ENCODE measurements at regions of chr14 and their contacts with region 1.

Region 1: DNA sequence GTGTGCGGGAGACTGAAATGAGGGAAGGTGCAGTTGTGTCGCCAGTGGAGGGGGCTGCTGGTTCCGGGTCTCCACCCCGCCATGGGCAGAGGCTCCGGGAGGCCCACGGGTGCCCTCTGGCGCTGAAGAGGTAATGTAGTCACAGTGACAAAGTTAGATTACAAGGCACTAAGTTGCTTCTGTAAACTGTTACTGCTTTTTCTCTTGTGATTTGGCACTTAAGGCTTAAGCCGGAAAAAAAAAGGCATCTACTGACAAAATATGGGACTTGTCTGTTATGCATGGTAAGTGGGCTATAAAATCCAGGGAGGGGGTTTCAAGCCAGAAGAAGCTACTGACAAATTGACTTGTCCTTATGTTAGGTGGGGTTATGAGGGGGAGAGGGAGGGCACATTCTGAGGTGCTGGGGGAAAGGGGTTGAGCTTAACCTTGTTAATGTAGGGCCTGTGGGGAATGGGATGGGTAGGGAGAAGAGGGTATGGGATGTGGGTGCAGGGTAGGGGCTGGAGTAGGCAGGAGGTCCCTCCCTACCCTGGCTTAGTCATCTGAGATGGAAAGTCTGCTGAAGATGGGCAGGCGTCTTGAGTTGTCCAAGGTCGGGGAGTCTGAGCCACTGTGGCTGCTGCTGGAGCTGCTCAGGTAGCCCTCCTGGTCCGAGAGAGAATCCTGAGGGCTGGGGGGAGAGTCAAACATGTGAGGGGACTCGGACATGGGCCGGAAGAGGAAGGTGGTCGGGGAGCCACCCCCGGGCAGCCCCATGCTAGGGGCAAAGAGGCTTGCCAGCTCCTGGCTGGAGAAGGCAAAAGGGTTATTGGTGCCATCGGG is 3.7 kb downstream of the ZFP36L1 start:
- DNase-seq: peak; percentile 70 to 91 (median 88)
- ATAC-seq: peak; percentile 64
- H3K4me3 ChIP-seq: peak overlapping the region; percentile 91
- H3K4me3 Mint-ChIP-seq: peak overlapping the region; percentile 92 to 99 (median 95)
- H3K27ac ChIP-seq: peak overlapping the region; percentile 100
- H3K27ac Mint-ChIP-seq: peak overlapping the region; percentile 91 to 100 (median 99)
- H3K4me1 ChIP-seq: peaks cover 37 to 43% of the 10 kb centered on the region in 2 donors
- H3K4me1 Mint-ChIP-seq: peaks cover 43 to 61% (median 50%) of the 10 kb centered on the region in 7 donors
- H3K27me3 ChIP-seq: no peaks in the 10 kb centered on the region
- H3K27me3 Mint-ChIP-seq: peaks cover 0 to 2% (median 0%) of the 10 kb centered on the region in 5 donors

Region 2: GRCh38 chr14:67943947-67944346 is 845.3 kb before region 1 on chr14:
- CTCF ChIA-PET with region 1: interaction called, 3 read pairs
- POLR2A ChIA-PET with region 1: interaction called, 3 read pairs
- intact Hi-C with region 1: loop called in 1 of 2 experiments (anchors 1 kb)
- DNase-seq: peak in 7 of 9 donors; percentile 22 to 57 (median 49)
- ATAC-seq: peak; percentile 80
- H3K4me3 ChIP-seq: no peak overlapping the region
- H3K4me3 Mint-ChIP-seq: no peak overlapping the region
- H3K27ac ChIP-seq: no peak overlapping the region
- H3K27ac Mint-ChIP-seq: no peak overlapping the region
- H3K4me1 ChIP-seq: no peaks in the 10 kb centered on the region
- H3K4me1 Mint-ChIP-seq: peaks cover 0 to 2% (median 0%) of the 10 kb centered on the region in 7 donors
- H3K27me3 ChIP-seq: no peaks in the 10 kb centered on the region
- H3K27me3 Mint-ChIP-seq: no peaks in the 10 kb centered on the region

Region 3: DNA sequence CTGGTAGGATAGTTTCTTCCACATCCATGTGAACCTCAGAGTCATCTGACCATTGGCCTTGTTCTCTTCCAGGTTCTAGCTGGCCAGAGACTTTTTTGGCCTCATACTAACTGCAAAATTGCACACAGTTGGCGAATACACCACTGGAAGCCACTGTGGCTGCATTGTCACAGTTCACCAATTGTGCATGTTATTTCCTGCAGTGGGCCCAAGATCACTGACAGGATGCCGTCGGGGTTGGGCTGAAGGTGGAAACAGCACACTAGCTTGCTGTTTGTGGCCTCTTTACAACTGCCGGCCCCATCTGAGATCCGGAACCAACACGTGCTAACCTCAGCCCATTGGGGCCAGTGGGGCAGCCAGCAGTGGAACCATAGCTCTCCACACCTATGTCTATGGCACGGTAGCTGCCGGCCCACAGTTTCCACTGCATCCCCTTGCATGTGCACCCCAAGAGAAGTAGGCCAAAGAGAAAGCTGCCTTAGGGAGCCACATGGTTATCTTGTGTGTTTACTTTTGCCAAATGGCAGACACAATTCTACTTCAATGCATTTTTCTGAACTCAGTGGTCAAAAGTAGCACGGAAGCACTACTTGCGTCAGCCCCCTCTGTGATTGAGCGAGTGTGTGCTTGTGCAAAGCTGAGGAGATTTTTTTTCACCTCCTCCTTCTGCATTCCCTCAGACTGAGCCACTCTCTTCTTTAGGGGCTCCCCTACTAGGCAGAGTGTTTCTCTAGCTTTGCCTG is 505.7 kb before region 1 on chr14:
- CTCF ChIA-PET with region 1: interaction called, 26 read pairs
- POLR2A ChIA-PET with region 1: interaction called, 180 read pairs
- intact Hi-C with region 1: loop called (anchors 1 to 10 kb)
- DNase-seq: peak; percentile 20 to 70 (median 62)
- ATAC-seq: peak; percentile 78
- H3K4me3 ChIP-seq: peak overlapping the region; percentile 14
- H3K4me3 Mint-ChIP-seq: peak overlapping the region; percentile 44 to 86 (median 72)
- H3K27ac ChIP-seq: peak overlapping the region; percentile 74
- H3K27ac Mint-ChIP-seq: peak overlapping the region; percentile 93 to 99 (median 97)
- H3K4me1 ChIP-seq: peaks cover 36 to 70% of the 10 kb centered on the region in 2 donors
- H3K4me1 Mint-ChIP-seq: peaks cover 44 to 96% (median 86%) of the 10 kb centered on the region in 7 donors
- H3K27me3 ChIP-seq: no peaks in the 10 kb centered on the region
- H3K27me3 Mint-ChIP-seq: no peaks in the 10 kb centered on the region

Region 4: GRCh38 chr14:68482772-68483395 is 306.3 kb before region 1 on chr14:
- CTCF ChIA-PET with region 1: interaction called, 3 read pairs
- POLR2A ChIA-PET with region 1: interaction called, 19 read pairs
- intact Hi-C with region 1: loop called (anchors 5 kb)
- DNase-seq: no peak
- ATAC-seq: no peak
- H3K4me3 ChIP-seq: no peak overlapping the region
- H3K4me3 Mint-ChIP-seq: peak overlapping the region in 9 of 10 donors; percentile 28 to 85 (median 39)
- H3K27ac ChIP-seq: no peak overlapping the region
- H3K27ac Mint-ChIP-seq: peak overlapping the region in 8 of 9 donors; percentile 71 to 96 (median 92)
- H3K4me1 ChIP-seq: peaks cover 22 to 48% of the 10 kb centered on the region in 2 donors
- H3K4me1 Mint-ChIP-seq: peaks cover 37 to 84% (median 79%) of the 10 kb centered on the region in 7 donors
- H3K27me3 ChIP-seq: no peaks in the 10 kb centered on the region
- H3K27me3 Mint-ChIP-seq: no peaks in the 10 kb centered on the region

Region 5: GRCh38 chr14:68603533-68604365 is 185.5 kb before region 1 on chr14:
- CTCF ChIA-PET with region 1: no interaction called
- POLR2A ChIA-PET with region 1: no interaction called
- intact Hi-C with region 1: no loop called
- DNase-seq: no peak
- ATAC-seq: no peak
- H3K4me3 ChIP-seq: no peak overlapping the region
- H3K4me3 Mint-ChIP-seq: no peak overlapping the region
- H3K27ac ChIP-seq: no peak overlapping the region
- H3K27ac Mint-ChIP-seq: no peak overlapping the region
- H3K4me1 ChIP-seq: peaks cover 0 to 5% of the 10 kb centered on the region in 2 donors
- H3K4me1 Mint-ChIP-seq: peaks cover 8 to 21% (median 18%) of the 10 kb centered on the region in 7 donors
- H3K27me3 ChIP-seq: no peaks in the 10 kb centered on the region
- H3K27me3 Mint-ChIP-seq: no peaks in the 10 kb centered on the region

Region 6: DNA sequence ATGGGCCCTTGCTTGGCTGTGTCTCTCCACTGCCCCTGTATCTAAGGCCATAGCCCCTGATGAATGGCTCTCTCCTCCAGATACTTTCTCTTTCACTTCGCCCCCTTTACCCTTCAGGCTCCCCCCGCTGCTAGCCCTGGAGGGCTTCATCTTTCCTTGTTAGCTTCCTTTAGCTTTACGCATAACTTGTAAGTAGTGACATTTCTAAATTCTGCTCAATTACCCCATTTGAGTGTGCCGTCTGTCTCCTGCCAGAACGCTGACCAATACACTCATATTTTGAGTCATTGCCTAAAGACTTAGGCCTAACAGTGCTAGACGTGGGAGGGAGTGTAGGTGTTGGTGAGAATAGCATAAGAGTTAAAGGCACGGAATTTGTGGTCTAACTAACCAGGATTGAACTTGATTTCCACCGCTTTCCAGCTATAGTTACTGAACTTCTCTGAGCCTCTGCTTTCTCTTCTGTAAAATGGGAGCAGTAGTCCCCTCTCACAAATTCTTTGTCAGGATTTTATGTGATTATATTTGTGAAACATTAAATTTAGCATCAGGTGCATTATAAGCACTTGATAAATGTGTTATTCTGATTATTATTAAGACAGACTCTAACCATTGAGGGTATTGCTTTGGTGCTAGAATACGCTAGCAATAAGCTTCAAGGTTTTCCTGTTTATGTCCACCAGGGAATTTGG is 125.7 kb before region 1 on chr14:
- CTCF ChIA-PET with region 1: no interaction called
- POLR2A ChIA-PET with region 1: no interaction called
- intact Hi-C with region 1: loop called in 1 of 2 experiments (anchors 5 kb)
- DNase-seq: peak in 1 of 9 donors; percentile 63
- ATAC-seq: peak; percentile 34
- H3K4me3 ChIP-seq: peak overlapping the region; percentile 25
- H3K4me3 Mint-ChIP-seq: peak overlapping the region in 9 of 10 donors; percentile 21 to 82 (median 30)
- H3K27ac ChIP-seq: no peak overlapping the region
- H3K27ac Mint-ChIP-seq: peak overlapping the region in 5 of 9 donors; percentile 8 to 79 (median 62)
- H3K4me1 ChIP-seq: peaks cover 0 to 24% of the 10 kb centered on the region in 2 donors
- H3K4me1 Mint-ChIP-seq: peaks cover 18 to 53% (median 27%) of the 10 kb centered on the region in 7 donors
- H3K27me3 ChIP-seq: no peaks in the 10 kb centered on the region
- H3K27me3 Mint-ChIP-seq: peaks cover 0 to 4% (median 0%) of the 10 kb centered on the region in 5 donors

Region 7: DNA sequence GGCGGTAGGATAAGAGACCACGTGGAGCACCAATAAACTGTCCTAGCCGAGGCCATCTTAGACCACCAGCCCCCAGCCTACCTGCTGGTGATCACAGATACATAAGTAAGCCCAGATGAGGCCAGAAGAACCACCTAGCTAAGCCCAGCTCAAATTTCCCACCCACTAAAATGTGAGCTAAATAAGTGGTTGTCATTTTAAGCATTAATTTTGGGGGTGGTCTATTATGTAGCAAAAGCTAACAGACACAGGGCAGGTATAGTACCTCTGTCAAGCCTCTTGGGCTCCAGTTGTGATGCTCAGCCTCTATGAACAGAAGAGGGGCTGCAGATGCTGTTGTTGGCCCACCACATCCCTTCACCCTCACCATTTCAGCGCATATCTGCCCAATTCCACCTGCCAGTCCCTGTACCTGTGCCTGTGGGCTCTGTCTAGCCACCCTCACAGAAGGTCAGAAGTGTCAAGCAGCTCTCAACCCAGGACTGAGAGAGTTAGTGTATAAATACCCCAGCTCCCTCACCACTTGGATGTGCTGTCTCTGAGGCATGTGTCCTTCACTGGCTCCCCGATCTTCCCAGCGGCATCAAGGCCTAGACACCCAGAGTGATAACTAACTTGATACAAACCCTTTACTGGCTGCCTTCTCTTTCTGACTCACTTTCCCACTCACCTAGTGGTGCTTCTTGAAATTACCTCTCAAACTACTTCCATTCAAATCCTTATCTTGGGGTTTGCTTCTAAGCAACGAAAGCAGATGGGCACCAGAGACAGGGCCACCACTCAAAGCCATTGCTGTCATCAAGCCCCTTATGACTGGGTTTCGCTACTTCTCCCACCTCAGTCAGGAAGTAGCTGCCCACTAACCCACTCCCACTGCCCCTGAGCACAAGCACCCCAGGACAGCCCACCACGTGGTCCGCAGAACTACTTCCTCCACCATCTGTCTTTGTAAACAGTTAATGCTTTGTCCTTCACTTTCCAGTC is 13.8 kb before region 1 on chr14:
- CTCF ChIA-PET with region 1: interaction called, 46 read pairs
- POLR2A ChIA-PET with region 1: interaction called, 401 read pairs
- intact Hi-C with region 1: no loop called
- DNase-seq: no peak
- ATAC-seq: no peak
- H3K4me3 ChIP-seq: no peak overlapping the region
- H3K4me3 Mint-ChIP-seq: peak overlapping the region in 2 of 10 donors; percentile 25 to 33
- H3K27ac ChIP-seq: no peak overlapping the region
- H3K27ac Mint-ChIP-seq: peak overlapping the region in 4 of 9 donors; percentile 39 to 68 (median 47)
- H3K4me1 ChIP-seq: peaks cover 26 to 49% of the 10 kb centered on the region in 2 donors
- H3K4me1 Mint-ChIP-seq: peaks cover 47 to 91% (median 80%) of the 10 kb centered on the region in 7 donors
- H3K27me3 ChIP-seq: no peaks in the 10 kb centered on the region
- H3K27me3 Mint-ChIP-seq: no peaks in the 10 kb centered on the region

Measured in naive thymus-derived CD4-positive, alpha-beta T cell (primary cell).